Mammary epithelial cell (primary cell): ENCODE measurements at regions of chr5 and their contacts with region 1.

Region 1: GRCh38 chr5:39283231-39283818 is 64.0 kb upstream of the FYB1 start:
- DNase-seq: peak; percentile 76
- H3K4me3 ChIP-seq: no peak overlapping the region
- H3K27ac ChIP-seq: no peak overlapping the region
- H3K4me1 ChIP-seq: no peaks in the 10 kb centered on the region
- H3K27me3 ChIP-seq: no peaks in the 10 kb centered on the region
- CTCF ChIP-seq: peak; percentile 63 to 78

Region 2: DNA sequence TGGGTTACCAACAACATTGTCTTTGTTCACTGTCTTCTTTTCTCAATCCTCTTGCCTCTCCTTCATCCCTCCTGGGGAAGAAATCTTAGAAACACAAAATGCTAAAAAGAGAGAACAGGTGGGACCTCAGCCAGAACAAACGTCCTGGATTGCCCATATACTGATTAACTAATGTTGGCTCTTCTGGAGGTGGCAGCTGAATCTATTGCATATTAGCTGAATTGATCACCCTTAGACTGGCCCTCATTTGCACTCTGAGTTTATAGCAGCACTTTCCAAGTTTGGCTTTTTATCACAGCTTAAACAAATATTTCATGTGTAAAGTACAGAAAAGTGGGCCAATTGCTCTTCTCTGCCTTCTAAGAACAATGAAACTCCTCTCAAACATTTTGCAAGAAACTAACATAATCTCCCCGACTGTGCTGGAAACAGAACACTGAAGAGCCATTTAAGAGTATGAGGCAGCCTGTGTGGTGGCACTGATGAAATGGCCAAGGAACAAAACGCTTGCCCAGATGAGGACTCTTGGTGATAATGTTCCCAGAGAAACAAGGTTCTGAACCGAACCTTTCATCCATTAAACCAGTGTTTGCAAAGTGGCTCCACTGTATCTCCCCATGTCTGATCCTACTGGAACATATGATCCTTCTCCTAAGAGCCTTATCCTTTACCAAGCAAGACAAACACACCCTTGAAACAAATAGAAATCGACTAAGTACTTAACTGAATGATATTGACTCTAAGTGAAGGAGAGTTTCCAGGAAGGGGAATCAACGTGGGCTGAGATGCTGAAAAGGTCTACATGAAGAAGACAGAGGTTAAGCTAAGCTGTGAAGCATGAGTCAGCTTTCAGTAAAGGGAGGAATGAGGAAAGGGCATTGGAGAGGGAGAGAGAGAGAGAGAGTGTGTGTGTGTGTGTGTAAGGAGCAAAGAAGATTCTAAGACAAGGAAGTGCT is 643.7 kb before region 1 on chr5:
- CTCF ChIA-PET with region 1: no interaction called
- dilution Hi-C with region 1: no loop called
- in situ Hi-C with region 1: no loop called
- intact Hi-C with region 1: no loop called
- DNase-seq: no peak
- H3K4me3 ChIP-seq: no peak overlapping the region
- H3K27ac ChIP-seq: no peak overlapping the region
- H3K4me1 ChIP-seq: no peaks in the 10 kb centered on the region
- H3K27me3 ChIP-seq: peaks cover 4% of the 10 kb centered on the region
- CTCF ChIP-seq: no peak

Region 3: DNA sequence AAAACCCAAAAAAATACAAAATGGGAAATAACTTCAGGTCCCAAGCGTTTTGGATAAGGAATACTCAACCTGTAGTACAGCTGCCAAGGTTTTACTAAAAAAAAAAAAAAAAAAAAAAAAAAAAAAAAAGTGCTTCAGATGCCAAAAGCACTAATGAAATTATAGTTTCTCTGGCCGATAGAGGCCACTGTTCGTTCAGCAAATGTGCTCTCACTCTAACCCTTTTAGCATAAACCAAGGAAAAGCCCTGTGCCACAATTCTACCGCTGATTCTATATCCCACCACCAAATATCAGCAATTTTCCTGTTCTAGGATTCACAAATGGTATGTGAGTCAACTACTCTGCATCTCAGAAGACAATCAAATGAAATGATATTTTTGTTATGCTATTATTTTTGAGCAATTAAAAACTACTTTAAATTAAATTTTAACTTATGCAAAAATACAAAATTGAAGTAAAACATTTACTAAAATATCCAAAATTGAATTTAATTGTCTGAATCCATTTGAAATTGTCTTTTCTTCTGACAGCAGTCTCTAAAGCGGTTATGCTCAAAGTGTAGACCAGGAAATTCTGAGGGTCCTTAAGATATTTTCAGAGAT is 288.9 kb before region 1 on chr5:
- CTCF ChIA-PET with region 1: no interaction called
- dilution Hi-C with region 1: no loop called
- in situ Hi-C with region 1: loop called in 1 of 2 experiments (anchors 25 kb)
- intact Hi-C with region 1: loop called (anchors 1 kb)
- DNase-seq: peak; percentile 61
- H3K4me3 ChIP-seq: no peak overlapping the region
- H3K27ac ChIP-seq: no peak overlapping the region
- H3K4me1 ChIP-seq: no peaks in the 10 kb centered on the region
- H3K27me3 ChIP-seq: no peaks in the 10 kb centered on the region
- CTCF ChIP-seq: peak; percentile 49 to 63

Region 4: GRCh38 chr5:39005566-39006232 is 277.6 kb before region 1 on chr5:
- CTCF ChIA-PET with region 1: no interaction called
- dilution Hi-C with region 1: no loop called
- in situ Hi-C with region 1: loop called in 1 of 2 experiments (anchors 25 kb)
- intact Hi-C with region 1: loop called (anchors 2 kb)
- DNase-seq: peak; percentile 5
- H3K4me3 ChIP-seq: no peak overlapping the region
- H3K27ac ChIP-seq: no peak overlapping the region
- H3K4me1 ChIP-seq: no peaks in the 10 kb centered on the region
- H3K27me3 ChIP-seq: no peaks in the 10 kb centered on the region
- CTCF ChIP-seq: peak; percentile 21 to 49

Region 5: GRCh38 chr5:39148983-39149534 is 134.3 kb before region 1 on chr5:
- CTCF ChIA-PET with region 1: no interaction called
- dilution Hi-C with region 1: no loop called
- in situ Hi-C with region 1: no loop called
- intact Hi-C with region 1: loop called (anchors 1 kb)
- DNase-seq: no peak
- H3K4me3 ChIP-seq: no peak overlapping the region
- H3K27ac ChIP-seq: no peak overlapping the region
- H3K4me1 ChIP-seq: no peaks in the 10 kb centered on the region
- H3K27me3 ChIP-seq: no peaks in the 10 kb centered on the region
- CTCF ChIP-seq: peak; percentile 33 to 41

Region 6: GRCh38 chr5:39547553-39548154 is 264.3 kb after region 1 on chr5:
- CTCF ChIA-PET with region 1: no interaction called
- dilution Hi-C with region 1: no loop called
- in situ Hi-C with region 1: no loop called
- intact Hi-C with region 1: loop called (anchors 10 kb)
- DNase-seq: peak; percentile 44
- H3K4me3 ChIP-seq: no peak overlapping the region
- H3K27ac ChIP-seq: no peak overlapping the region
- H3K4me1 ChIP-seq: peaks cover 3% of the 10 kb centered on the region
- H3K27me3 ChIP-seq: no peaks in the 10 kb centered on the region
- CTCF ChIP-seq: peak; percentile 74 to 77

Region 7: DNA sequence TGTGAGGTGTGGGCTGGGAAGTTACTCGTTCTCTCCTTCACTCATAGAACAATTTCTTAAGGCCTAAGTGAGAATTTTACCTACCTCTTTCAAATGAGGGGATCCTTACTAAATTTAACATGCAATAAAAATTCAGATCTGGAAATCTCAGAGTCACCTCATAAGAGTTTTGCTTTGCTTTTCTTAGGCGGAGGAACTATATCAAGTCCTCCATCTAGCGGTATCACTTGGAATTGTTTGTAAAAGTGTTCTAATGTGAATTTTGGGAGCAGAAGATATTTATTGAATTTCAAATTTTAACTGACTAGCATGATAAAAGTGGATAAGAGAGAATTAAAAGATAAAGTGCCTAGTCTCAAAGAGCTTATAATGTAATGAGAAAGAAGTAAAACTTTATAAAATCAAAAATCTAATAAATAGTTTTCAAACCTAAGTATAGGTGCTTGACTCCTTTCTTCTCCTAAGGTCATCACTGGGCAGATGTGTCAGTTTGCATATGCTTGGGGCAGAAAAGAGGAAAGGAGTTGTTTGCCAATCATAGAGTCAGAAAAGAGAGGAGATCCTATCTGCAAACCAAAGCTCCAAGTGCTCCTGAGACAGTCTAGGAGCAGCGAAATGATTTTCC is 287.2 kb after region 1 on chr5:
- CTCF ChIA-PET with region 1: no interaction called
- dilution Hi-C with region 1: no loop called
- in situ Hi-C with region 1: no loop called
- intact Hi-C with region 1: loop called (anchors 5 kb)
- DNase-seq: peak; percentile 28
- H3K4me3 ChIP-seq: no peak overlapping the region
- H3K27ac ChIP-seq: no peak overlapping the region
- H3K4me1 ChIP-seq: no peaks in the 10 kb centered on the region
- H3K27me3 ChIP-seq: no peaks in the 10 kb centered on the region
- CTCF ChIP-seq: peak; percentile 69 to 71

Region 8: GRCh38 chr5:39616131-39616530 is 332.8 kb after region 1 on chr5:
- CTCF ChIA-PET with region 1: no interaction called
- dilution Hi-C with region 1: no loop called
- in situ Hi-C with region 1: no loop called
- intact Hi-C with region 1: no loop called
- DNase-seq: peak; percentile 10
- H3K4me3 ChIP-seq: no peak overlapping the region
- H3K27ac ChIP-seq: no peak overlapping the region
- H3K4me1 ChIP-seq: no peaks in the 10 kb centered on the region
- H3K27me3 ChIP-seq: no peaks in the 10 kb centered on the region
- CTCF ChIP-seq: no peak